Right ventricle myocardium superior (tissue), 1 donor: ENCODE measurements at regions of chr15 and their contacts with region 1.

Region 1: GRCh38 chr15:91852741-91853510 is 582 bp upstream of the SLCO3A1 start:
- DNase-seq: peak; percentile 89
- ATAC-seq: peak; percentile 86

Region 2: GRCh38 chr15:92077353-92078085 is 224.6 kb after region 1 on chr15:
- intact Hi-C with region 1: loop called (anchors 5 kb)
- DNase-seq: peak; percentile 83
- ATAC-seq: peak; percentile 78